PC-3 (cell line): ENCODE measurements at regions of chr15 and their contacts with region 1.

Region 1: DNA sequence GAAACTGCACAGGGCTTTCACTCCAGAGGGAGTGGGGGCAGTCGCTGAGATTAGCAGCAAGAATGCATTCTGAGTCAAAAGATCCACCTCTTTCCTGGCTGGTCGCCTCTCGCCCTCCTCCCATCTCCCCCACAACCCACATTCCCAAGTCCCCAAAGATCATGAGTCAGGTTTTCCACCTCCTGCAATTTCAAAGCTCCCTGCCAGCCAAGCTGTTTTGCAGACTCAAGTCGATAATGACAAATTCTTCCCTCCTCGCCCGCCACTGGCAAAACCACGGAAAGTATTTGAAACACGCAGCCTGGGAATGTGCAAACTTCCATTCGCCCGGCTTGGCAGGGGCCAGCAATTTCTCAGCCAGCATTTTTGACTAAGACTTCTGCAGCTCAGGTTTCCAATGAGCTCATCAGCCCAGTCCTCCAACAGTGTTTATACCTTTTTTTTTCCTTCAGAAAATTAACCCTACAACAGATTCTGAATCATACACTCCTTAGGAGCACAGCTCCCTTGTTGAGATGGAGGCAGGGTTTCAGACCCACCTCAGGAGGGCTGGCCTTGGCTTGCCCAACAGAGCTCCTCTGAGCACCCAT is 181.4 kb downstream of the SMAD6 start:
- DNase-seq: peak; percentile 99
- ATAC-seq: peak; percentile 84
- H3K4me3 ChIP-seq: no peak overlapping the region
- H3K27ac ChIP-seq: peak overlapping the region; percentile 71
- H3K4me1 ChIP-seq: peaks cover 38% of the 10 kb centered on the region
- H3K27me3 ChIP-seq: no peaks in the 10 kb centered on the region
- CTCF ChIP-seq: no peak

Region 2: GRCh38 chr15:66862878-66863335 is 20.5 kb before region 1 on chr15:
- CTCF ChIA-PET with region 1: interaction called, 9 read pairs
- POLR2A ChIA-PET with region 1: no interaction called
- intact Hi-C with region 1: loop called (anchors 2 kb)
- DNase-seq: peak; percentile 94
- ATAC-seq: peak; percentile 92
- H3K4me3 ChIP-seq: no peak overlapping the region
- H3K27ac ChIP-seq: peak overlapping the region; percentile 65
- H3K4me1 ChIP-seq: peaks cover 18% of the 10 kb centered on the region
- H3K27me3 ChIP-seq: no peaks in the 10 kb centered on the region
- CTCF ChIP-seq: peak; percentile 87